ENCODE measurements at regions of chr1 and their contacts with region 1.

Region 1: GRCh38 chr1:234610348-234611152 is 572 bp upstream of the IRF2BP2 start:
- DNase-seq: peak; percentile 85
- H3K4me3 ChIP-seq: peak overlapping the region; percentile 44
- CTCF ChIP-seq: no peak

Region 2: GRCh38 chr1:234699795-234700665 is 89.5 kb after region 1 on chr1:
- in situ Hi-C with region 1: loop called (anchors 10 kb)
- DNase-seq: no peak
- H3K4me3 ChIP-seq: no peak overlapping the region
- CTCF ChIP-seq: no peak